Left cardiac atrium (tissue), 4 donors: ENCODE measurements at regions of chr7 and their contacts with region 1.

Region 1: DNA sequence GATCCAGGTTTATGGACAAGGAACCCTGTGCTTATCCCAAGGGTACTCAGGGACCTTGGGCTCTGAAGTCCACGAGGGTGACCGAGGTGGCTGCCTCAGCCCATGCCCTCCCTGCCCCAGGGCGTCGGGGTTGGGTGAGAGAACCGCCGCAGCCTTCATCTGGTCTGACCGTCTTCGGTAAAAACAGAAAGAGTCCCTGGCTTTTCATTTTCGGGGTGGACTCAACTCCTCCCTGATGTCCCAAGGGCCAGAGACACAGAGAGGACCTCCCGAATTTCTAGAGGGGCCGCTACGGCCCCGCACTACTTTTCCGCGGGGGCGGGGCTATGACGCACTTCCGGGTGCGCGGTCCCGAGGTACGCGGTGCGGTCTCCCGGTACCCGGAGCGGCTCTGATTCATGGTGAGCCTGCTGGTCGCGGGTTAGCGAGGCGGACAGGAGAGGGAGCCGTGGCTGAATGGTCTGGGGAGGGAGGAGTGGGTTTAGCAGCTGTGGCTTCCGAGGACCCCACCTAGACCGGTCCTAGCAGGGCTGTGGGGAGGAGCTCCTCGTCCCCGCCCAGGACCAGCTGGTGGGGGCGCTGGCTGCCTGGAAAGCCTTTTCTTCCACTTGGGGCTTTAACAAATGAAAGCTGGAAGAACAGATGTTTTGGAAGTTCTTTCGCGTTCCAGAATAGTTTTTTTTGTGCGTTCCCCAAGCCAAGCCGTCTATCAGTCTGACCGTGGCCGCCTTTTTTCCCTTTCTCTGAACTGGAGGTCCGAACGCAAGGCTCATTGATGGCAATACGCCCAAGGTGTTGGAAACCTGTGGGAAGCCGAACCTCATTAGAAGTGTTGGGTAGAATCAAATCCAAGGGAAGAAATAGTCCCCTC is at the start of gene ZSCAN21:
- DNase-seq: peak; percentile 90
- ATAC-seq: peak; percentile 98 to 99
- total RNA-seq, gene ZSCAN21: 8.4 to 9.1 TPM

Region 2: DNA sequence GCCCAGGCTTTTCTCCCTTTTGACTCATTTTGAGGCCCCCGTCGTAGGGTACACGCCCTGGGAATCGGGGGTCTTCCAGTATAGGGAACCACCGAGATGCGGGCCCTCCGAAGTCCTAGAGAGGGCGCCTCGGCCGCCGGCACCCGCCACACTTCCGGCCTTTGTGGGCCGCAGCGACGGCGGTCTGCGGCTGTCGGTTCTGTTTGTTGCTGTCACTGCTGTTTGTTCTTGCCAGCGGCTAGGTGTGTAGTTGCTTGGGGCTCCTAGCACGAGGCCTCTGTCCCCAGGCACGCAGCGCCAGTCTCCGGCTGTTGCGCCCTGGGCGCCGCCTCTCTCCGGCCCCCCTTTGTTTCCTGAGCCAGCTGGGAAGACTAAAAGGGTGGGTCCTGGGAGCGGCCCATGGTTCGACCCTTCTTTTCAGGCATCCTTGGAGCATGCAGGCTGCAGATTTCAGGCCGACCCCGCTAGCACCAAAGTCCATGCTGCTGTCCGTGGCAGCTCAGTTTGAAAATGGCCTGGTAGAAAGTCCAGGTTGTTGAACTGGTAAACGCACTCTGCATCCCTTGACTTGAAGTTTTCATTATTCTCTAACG is 52.0 kb before region 1 on chr7:
- intact Hi-C with region 1: loop called in 1 of 2 experiments (anchors 10 kb)
- DNase-seq: peak; percentile 60
- ATAC-seq: peak; percentile 84 to 87

Region 3: GRCh38 chr7:100008525-100008924 is 41.2 kb before region 1 on chr7:
- intact Hi-C with region 1: no loop called
- DNase-seq: no peak
- ATAC-seq: no peak

Region 4: DNA sequence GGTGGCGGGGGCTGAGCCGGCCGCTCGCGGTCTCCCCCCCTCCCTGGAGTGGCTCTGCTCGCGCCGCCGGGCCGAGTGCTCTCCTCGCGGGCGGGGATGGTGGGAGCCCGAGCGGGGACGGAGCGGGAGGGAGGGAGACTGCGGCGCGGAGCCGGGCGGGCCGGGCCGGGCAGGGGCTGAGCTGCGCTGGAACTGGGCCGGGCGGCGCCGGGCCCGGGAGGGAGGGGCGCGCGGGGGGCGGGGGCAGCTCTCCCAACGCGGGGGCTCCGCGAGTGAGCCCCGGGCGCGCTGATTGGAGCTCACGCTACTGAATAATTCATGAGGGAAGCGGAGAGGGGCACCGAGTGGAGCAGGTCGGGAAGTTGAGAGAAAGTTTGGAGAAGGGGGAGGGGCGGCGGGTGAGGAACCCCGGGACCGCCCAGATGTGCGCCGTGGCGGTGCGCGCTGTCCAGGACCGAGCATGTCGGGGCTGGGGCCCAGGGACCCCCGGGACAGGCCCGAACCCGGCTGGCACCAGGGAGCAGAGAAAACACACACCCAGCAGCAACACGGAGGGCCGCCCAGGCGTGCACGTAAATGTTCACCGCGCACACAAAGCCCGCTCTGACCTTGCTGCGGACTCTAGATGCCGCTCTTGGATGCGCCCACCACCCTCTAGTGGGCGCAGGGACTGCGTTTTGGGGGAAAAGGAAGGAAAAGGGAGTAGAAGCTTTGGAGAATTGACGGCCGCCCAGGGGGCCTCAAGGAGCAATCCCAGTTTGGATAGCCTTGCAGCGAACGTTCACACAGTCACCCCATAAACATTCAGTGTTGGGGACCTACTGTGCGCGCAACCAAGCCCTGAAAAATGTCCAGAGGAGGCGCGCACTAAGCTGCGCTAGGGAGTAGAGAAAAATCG is 777.9 kb after region 1 on chr7 and contains the start of gene EPHB4:
- intact Hi-C with region 1: no loop called
- DNase-seq: peak; percentile 91
- ATAC-seq: peak; percentile 87 to 88
- total RNA-seq, gene EPHB4: 27.5 to 46.8 TPM